MCF 10A (cell line): ENCODE measurements at regions of chr5 and their contacts with region 1.

Region 1: DNA sequence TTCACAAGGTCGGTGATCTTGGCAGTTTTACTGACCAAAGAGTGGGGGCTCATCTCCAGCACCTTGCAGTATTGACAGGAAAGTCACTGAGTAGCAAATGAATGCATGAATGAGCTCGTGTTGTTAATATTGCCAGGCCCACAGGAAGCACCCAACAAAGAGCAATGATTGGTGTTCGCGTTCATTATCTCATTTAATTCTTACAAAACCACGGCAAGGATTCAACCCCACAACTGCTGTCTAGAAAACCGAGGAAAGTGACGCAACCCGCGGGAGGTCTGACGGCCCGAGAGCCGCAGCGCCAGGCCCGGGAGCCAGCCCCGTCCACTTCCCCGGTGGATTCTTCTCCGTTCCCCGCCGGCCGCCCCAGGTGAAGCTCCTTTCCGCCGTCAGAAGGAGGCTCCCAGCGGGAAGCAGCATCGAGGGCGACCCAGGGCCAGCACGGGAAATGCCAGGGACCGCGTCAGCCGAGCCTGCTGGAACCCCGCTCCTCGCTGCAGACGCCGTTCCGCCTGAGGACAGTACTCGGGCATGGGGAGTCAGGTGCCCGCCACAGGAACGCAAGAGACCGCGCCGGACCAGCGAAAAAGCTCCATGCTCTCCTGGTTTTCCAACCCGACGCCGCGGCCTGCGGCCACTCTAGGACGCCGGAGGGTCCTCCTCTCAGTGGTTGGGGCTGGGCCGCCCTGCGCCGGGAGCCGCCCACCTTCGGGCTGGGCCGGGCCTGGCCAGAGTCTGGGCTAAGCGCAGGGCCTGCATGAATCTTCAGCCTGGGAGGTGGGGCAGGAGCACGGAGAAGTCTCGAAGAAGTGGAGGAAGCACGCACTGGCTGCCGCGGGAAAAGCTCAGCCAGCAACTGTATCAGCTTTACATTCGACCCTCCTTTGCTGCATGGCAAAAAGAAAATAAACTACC is 19.8 kb upstream of the FER start:
- DNase-seq: peak; percentile 91
- H3K4me3 Mint-ChIP-seq: peak overlapping the region; percentile 77
- H3K27ac Mint-ChIP-seq: peak overlapping the region; percentile 99
- H3K4me1 Mint-ChIP-seq: peaks cover 27% of the 10 kb centered on the region
- H3K27me3 Mint-ChIP-seq: no peaks in the 10 kb centered on the region
- CTCF ChIP-seq: no peak

Region 2: DNA sequence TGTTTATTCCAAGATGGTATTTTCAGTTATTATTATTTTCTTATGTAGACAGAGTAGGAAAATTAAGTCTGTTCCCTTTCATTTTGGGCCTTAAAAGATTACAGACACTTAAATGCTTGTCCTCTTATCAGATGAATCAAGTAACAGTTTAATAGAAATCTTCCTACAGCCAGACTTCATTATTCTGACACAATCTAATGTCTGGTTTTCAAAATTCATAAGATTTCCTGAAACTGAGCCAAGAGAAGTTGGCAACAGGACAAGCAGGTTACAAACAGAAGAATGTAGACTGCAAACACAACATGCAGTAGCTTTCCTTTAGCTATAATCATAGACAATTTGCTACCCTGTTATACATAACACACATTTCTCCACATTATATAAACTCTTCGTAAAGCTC is 476.6 kb before region 1 on chr5:
- CTCF ChIA-PET with region 1: no interaction called
- POLR2A ChIA-PET with region 1: no interaction called
- intact Hi-C with region 1: no loop called
- DNase-seq: peak; percentile 64
- H3K4me3 Mint-ChIP-seq: no peak overlapping the region
- H3K27ac Mint-ChIP-seq: no peak overlapping the region
- H3K4me1 Mint-ChIP-seq: peaks cover 4% of the 10 kb centered on the region
- H3K27me3 Mint-ChIP-seq: no peaks in the 10 kb centered on the region
- CTCF ChIP-seq: no peak

Region 3: DNA sequence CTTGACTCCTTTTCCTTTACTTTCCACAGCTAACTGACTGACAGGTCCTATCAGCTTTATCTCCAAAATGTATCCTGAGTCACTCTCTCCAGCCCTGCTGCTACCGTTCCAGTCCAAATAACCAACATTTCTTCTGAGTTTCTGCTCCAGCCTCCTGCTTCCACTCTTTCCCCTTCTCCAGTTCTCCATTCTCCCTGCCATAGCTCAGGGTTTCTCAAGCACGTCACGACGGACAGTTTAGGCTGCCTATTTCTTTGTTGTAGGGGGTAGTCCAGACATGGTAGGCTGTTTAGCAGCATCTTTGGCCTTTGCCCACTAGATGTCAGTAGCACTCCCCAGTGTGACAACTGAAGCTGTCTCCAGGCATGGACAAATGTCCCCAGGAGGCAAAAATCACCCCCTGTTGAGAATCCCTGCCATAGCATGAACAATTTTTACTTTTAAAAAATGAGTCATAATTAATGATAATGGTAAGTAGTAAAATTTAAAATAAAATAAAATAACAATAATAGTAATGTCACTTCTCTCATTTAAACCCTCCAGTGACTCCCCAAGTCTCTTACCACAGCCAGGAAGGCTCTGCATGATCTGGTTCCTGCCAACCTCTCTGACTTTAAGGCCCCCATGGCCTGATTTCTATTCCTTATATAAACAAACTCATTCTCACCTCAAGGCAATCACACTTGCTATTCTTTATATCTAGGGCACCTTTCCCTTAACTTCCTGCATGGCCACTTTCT is 85.6 kb before region 1 on chr5:
- CTCF ChIA-PET with region 1: interaction called, 12 read pairs
- POLR2A ChIA-PET with region 1: interaction called, 11 read pairs
- intact Hi-C with region 1: no loop called
- DNase-seq: peak; percentile 83
- H3K4me3 Mint-ChIP-seq: peak overlapping the region; percentile 5
- H3K27ac Mint-ChIP-seq: no peak overlapping the region
- H3K4me1 Mint-ChIP-seq: peaks cover 6% of the 10 kb centered on the region
- H3K27me3 Mint-ChIP-seq: no peaks in the 10 kb centered on the region
- CTCF ChIP-seq: peak; percentile 77

Region 4: GRCh38 chr5:108661590-108662219 is 66.2 kb before region 1 on chr5:
- CTCF ChIA-PET with region 1: no interaction called
- POLR2A ChIA-PET with region 1: interaction called, 18 read pairs
- intact Hi-C with region 1: loop called (anchors 5 kb)
- DNase-seq: peak; percentile 67
- H3K4me3 Mint-ChIP-seq: no peak overlapping the region
- H3K27ac Mint-ChIP-seq: no peak overlapping the region
- H3K4me1 Mint-ChIP-seq: peaks cover 20% of the 10 kb centered on the region
- H3K27me3 Mint-ChIP-seq: no peaks in the 10 kb centered on the region
- CTCF ChIP-seq: no peak

Region 5: DNA sequence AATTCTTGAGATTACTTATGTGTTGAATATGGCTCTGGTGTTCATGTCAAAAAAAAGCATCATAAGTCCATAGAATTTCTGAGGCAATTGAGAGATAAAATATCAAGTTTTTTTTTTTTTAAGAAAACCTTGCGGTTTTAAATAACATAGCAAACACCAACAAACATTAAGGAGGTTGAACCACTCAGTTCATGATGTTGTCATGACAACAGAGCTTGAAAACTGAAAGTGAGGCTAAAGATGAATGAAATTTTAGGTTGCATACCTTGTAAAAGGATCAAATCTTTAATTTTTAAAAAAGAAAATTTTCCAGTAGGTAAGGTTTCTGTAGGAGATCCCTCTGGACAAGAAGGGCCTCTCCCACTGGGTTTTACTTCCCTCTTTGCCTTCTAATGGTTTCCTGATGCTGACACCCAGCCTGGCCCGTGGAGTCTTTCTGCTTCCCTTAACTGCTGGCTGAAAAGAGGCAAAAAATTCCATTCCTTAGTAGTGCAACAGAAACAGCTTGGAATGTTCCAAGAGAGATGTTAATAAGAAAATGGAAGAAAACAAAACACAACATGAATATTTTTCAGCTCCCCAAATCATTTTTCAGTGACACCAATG is 40.2 kb before region 1 on chr5:
- CTCF ChIA-PET with region 1: no interaction called
- POLR2A ChIA-PET with region 1: interaction called, 11 read pairs
- intact Hi-C with region 1: no loop called
- DNase-seq: no peak
- H3K4me3 Mint-ChIP-seq: no peak overlapping the region
- H3K27ac Mint-ChIP-seq: no peak overlapping the region
- H3K4me1 Mint-ChIP-seq: no peaks in the 10 kb centered on the region
- H3K27me3 Mint-ChIP-seq: no peaks in the 10 kb centered on the region
- CTCF ChIP-seq: no peak

Region 6: DNA sequence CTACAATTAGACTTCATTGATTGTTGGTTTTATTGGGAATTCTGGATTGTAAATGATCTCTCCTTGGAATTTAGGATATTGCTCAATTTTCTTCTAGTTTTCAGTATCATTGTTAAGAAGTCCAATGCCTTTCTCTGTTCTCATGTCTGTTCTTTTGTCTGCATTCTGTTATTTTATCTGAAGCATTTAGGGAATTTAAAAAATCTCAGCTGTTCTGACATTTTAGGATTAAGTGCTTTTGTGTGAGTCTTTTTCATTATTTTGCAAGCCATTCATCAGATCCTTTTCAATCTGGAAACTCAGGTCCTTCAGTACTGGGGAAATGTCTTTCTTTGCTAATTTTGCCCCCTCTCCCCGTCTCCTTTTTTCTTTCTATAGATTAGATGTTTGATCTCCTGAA is 15.4 kb after region 1 on chr5:
- CTCF ChIA-PET with region 1: interaction called, 6 read pairs
- POLR2A ChIA-PET with region 1: interaction called, 206 read pairs
- intact Hi-C with region 1: loop called (anchors 1 kb)
- DNase-seq: no peak
- H3K4me3 Mint-ChIP-seq: no peak overlapping the region
- H3K27ac Mint-ChIP-seq: no peak overlapping the region
- H3K4me1 Mint-ChIP-seq: no peaks in the 10 kb centered on the region
- H3K27me3 Mint-ChIP-seq: no peaks in the 10 kb centered on the region
- CTCF ChIP-seq: no peak

Region 7: DNA sequence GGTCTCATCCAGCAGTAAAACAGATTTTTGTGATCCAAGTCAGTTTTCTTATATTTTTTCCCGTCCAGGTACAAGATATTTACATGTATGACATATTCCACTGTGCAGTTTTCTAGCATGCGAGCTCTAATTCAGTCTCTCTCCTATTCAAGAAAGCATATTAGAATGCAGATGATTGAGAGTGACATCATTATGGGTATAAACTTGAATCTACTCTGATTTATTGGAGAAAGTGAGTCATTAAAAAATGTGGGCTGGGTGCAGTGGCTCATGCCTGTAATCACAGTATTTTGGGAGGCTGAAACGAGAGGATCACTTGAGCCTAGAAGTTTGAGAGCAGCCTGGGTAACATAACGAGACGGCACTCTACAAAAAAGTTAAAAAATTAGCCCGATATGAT is 26.0 kb after region 1 on chr5:
- CTCF ChIA-PET with region 1: interaction called, 7 read pairs
- POLR2A ChIA-PET with region 1: interaction called, 206 read pairs
- intact Hi-C with region 1: no loop called
- DNase-seq: peak; percentile 68
- H3K4me3 Mint-ChIP-seq: peak overlapping the region; percentile 70
- H3K27ac Mint-ChIP-seq: peak overlapping the region; percentile 94
- H3K4me1 Mint-ChIP-seq: peaks cover 13% of the 10 kb centered on the region
- H3K27me3 Mint-ChIP-seq: no peaks in the 10 kb centered on the region
- CTCF ChIP-seq: no peak

Region 8: DNA sequence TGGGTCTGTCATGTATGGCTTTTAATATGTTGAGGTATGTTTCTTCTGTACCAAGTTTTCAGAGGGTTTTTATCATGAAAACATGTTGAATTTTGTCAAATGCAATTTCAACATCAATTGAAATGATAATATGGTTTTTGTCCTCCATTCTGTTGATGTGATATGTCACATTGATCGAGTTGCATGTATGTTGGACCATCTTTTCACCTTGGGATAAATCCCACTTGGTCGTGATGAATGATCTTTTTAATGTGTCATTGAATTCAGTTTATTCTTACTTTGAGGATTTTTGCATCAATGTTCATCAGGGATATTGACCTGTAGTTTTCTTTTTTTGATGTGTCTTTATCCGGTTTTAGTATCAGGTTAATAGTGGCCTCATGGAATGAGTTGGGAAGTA is 393.3 kb after region 1 on chr5:
- CTCF ChIA-PET with region 1: no interaction called
- POLR2A ChIA-PET with region 1: no interaction called
- intact Hi-C with region 1: no loop called
- DNase-seq: no peak
- H3K4me3 Mint-ChIP-seq: no peak overlapping the region
- H3K27ac Mint-ChIP-seq: no peak overlapping the region
- H3K4me1 Mint-ChIP-seq: no peaks in the 10 kb centered on the region
- H3K27me3 Mint-ChIP-seq: no peaks in the 10 kb centered on the region
- CTCF ChIP-seq: no peak

Region 9: DNA sequence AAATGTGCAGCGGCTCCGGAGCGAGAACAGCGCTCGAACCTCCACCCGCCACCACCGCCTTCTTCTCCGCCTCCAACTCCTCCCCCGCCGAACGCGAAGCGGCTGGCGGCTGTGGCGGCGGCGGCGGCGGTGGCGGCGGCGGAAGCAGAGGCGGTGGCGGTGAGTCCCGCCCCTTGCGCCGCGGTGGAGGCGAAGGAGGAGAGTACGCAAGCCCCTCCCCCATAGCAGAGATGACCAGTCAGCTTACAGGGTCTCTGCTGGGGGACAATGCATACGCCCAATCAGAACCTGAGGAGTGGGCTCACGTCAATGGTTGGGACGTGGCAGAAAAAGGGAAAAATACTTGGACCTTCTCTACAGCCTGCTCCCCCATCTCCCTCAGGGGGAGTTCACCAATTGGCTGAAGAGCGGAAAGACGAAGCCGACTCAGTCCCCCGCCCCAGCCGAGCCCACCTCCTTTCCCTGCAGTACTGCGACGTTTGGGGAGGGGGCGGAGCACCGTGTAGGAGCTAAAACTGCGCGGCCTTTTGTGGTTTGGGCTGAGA is 682.0 kb after region 1 on chr5 and contains the start of gene PJA2:
- CTCF ChIA-PET with region 1: interaction called, 3 read pairs
- POLR2A ChIA-PET with region 1: interaction called, 19 read pairs
- intact Hi-C with region 1: no loop called
- DNase-seq: peak; percentile 100
- H3K4me3 Mint-ChIP-seq: peak within 1 kb of the TSS; percentile 99
- H3K27ac Mint-ChIP-seq: peak within 1 kb of the TSS; percentile 98
- H3K4me1 Mint-ChIP-seq: peaks cover 11% of the 10 kb centered on the region
- H3K27me3 Mint-ChIP-seq: no peaks in the 10 kb centered on the region
- CTCF ChIP-seq: no peak
- total RNA-seq, gene PJA2: 54.4 and 56.9 TPM in 2 replicates